ENCODE measurements at regions of chr1 and their contacts with region 1.

Region 1: GRCh38 chr1:84853741-84854721 is 39.0 kb downstream of the LPAR3 start:
- DNase-seq: peak; percentile 92
- H3K4me3 Mint-ChIP-seq: no peak overlapping the region
- H3K27ac Mint-ChIP-seq: peak overlapping the region; percentile 86
- H3K4me1 Mint-ChIP-seq: peaks cover 41% of the 10 kb centered on the region
- H3K27me3 Mint-ChIP-seq: no peaks in the 10 kb centered on the region
- CTCF ChIP-seq: no peak

Region 2: GRCh38 chr1:84192681-84193080 is 661.4 kb before region 1 on chr1:
- CTCF ChIA-PET with region 1: no interaction called
- POLR2A ChIA-PET with region 1: no interaction called
- intact Hi-C with region 1: no loop called
- DNase-seq: no peak
- H3K4me3 Mint-ChIP-seq: no peak overlapping the region
- H3K27ac Mint-ChIP-seq: no peak overlapping the region
- H3K4me1 Mint-ChIP-seq: no peaks in the 10 kb centered on the region
- H3K27me3 Mint-ChIP-seq: no peaks in the 10 kb centered on the region
- CTCF ChIP-seq: no peak

Region 3: GRCh38 chr1:84884656-84885389 is 30.8 kb after region 1 on chr1:
- CTCF ChIA-PET with region 1: interaction called, 5 read pairs
- POLR2A ChIA-PET with region 1: interaction called, 4 read pairs
- intact Hi-C with region 1: loop called (anchors 5 kb)
- DNase-seq: peak; percentile 16
- H3K4me3 Mint-ChIP-seq: no peak overlapping the region
- H3K27ac Mint-ChIP-seq: no peak overlapping the region
- H3K4me1 Mint-ChIP-seq: peaks cover 23% of the 10 kb centered on the region
- H3K27me3 Mint-ChIP-seq: no peaks in the 10 kb centered on the region
- CTCF ChIP-seq: no peak